ENCODE measurements at regions of chr19 and their contacts with region 1.

Region 1: GRCh38 chr19:43595999-43596841 is at the starts of genes IRGQ and ZNF576:
- DNase-seq: peak; percentile 100
- ATAC-seq: peak; percentile 82
- H3K4me3 Mint-ChIP-seq: peak within 1 kb of the TSS; percentile 98
- H3K27ac Mint-ChIP-seq: peak within 1 kb of the TSS; percentile 99
- H3K4me1 Mint-ChIP-seq: peaks cover 37% of the 10 kb centered on the region
- H3K27me3 Mint-ChIP-seq: no peaks in the 10 kb centered on the region
- total RNA-seq, gene IRGQ: 11.2 to 14.0 TPM
- total RNA-seq, gene ZNF576: 14.1 to 17.3 TPM

Region 2: DNA sequence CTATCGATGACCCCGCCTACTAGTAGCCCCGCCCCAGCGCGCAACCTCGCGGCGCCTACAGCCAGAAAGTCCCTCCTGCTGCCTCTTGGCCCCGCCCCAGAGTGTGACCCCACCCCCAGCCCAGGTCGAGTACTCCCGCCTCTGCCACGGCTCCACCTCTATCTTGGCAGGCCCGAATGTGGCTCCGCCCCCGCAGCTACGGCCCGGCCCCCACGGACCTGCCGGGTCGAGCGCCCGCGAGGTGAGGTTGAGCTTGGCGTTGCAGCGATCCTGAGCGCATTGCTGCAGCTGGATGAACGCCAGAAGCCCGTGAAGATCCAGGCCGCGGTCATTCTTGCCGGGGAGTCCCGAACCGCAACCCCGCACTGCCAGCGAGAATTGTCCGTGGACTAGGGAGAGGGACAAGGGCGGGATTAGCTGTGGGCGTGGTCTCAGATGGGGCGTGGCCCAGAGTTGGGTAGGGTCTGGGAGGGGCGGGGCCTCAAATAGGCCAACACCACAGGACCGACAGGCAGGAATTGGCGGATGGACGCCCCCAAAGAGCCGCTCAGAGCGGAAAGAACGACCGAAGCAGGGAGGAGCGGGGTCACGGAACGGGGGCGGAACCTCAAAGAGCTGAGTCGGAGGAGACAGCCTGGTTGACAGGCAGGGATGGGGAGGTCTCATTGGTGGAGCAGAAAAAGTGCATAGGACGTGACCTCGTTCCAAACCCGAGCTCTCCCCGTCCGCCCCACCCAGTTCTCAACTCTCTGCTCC is 132.7 kb before region 1 on chr19:
- CTCF ChIA-PET with region 1: interaction called, 11 read pairs
- POLR2A ChIA-PET with region 1: no interaction called
- DNase-seq: peak; percentile 99
- ATAC-seq: peak; percentile 88
- H3K4me3 Mint-ChIP-seq: peak overlapping the region; percentile 85
- H3K27ac Mint-ChIP-seq: peak overlapping the region; percentile 96
- H3K4me1 Mint-ChIP-seq: peaks cover 44% of the 10 kb centered on the region
- H3K27me3 Mint-ChIP-seq: no peaks in the 10 kb centered on the region

Region 3: GRCh38 chr19:43526884-43527859 is 69.0 kb before region 1 on chr19 and contains the start of gene ETHE1:
- CTCF ChIA-PET with region 1: interaction called, 88 read pairs
- POLR2A ChIA-PET with region 1: interaction called, 3 read pairs
- DNase-seq: peak; percentile 83
- ATAC-seq: peak; percentile 92
- H3K4me3 Mint-ChIP-seq: peak within 1 kb of the TSS; percentile 95
- H3K27ac Mint-ChIP-seq: peak within 1 kb of the TSS; percentile 68
- H3K4me1 Mint-ChIP-seq: peaks cover 29% of the 10 kb centered on the region
- H3K27me3 Mint-ChIP-seq: no peaks in the 10 kb centered on the region
- total RNA-seq, gene ETHE1: 67.9 to 69.1 TPM

Region 4: GRCh38 chr19:43555185-43555770 is 40.9 kb before region 1 on chr19:
- CTCF ChIA-PET with region 1: interaction called, 239 read pairs
- POLR2A ChIA-PET with region 1: interaction called, 20 read pairs
- DNase-seq: peak; percentile 91
- ATAC-seq: peak; percentile 95
- H3K4me3 Mint-ChIP-seq: no peak overlapping the region
- H3K27ac Mint-ChIP-seq: peak overlapping the region; percentile 6
- H3K4me1 Mint-ChIP-seq: peaks cover 8% of the 10 kb centered on the region
- H3K27me3 Mint-ChIP-seq: no peaks in the 10 kb centered on the region

Region 5: GRCh38 chr19:43570174-43570791 is 25.9 kb before region 1 on chr19:
- CTCF ChIA-PET with region 1: interaction called, 67 read pairs
- POLR2A ChIA-PET with region 1: interaction called, 44 read pairs
- DNase-seq: no peak
- ATAC-seq: peak; percentile 12
- H3K4me3 Mint-ChIP-seq: no peak overlapping the region
- H3K27ac Mint-ChIP-seq: no peak overlapping the region
- H3K4me1 Mint-ChIP-seq: peaks cover 20% of the 10 kb centered on the region
- H3K27me3 Mint-ChIP-seq: no peaks in the 10 kb centered on the region

Region 6: GRCh38 chr19:43584484-43584883 is 11.7 kb before region 1 on chr19:
- CTCF ChIA-PET with region 1: interaction called, 88 read pairs
- POLR2A ChIA-PET with region 1: interaction called, 9 read pairs
- DNase-seq: no peak
- ATAC-seq: no peak
- H3K4me3 Mint-ChIP-seq: no peak overlapping the region
- H3K27ac Mint-ChIP-seq: peak overlapping the region; percentile 86
- H3K4me1 Mint-ChIP-seq: peaks cover 45% of the 10 kb centered on the region
- H3K27me3 Mint-ChIP-seq: no peaks in the 10 kb centered on the region

Region 7: DNA sequence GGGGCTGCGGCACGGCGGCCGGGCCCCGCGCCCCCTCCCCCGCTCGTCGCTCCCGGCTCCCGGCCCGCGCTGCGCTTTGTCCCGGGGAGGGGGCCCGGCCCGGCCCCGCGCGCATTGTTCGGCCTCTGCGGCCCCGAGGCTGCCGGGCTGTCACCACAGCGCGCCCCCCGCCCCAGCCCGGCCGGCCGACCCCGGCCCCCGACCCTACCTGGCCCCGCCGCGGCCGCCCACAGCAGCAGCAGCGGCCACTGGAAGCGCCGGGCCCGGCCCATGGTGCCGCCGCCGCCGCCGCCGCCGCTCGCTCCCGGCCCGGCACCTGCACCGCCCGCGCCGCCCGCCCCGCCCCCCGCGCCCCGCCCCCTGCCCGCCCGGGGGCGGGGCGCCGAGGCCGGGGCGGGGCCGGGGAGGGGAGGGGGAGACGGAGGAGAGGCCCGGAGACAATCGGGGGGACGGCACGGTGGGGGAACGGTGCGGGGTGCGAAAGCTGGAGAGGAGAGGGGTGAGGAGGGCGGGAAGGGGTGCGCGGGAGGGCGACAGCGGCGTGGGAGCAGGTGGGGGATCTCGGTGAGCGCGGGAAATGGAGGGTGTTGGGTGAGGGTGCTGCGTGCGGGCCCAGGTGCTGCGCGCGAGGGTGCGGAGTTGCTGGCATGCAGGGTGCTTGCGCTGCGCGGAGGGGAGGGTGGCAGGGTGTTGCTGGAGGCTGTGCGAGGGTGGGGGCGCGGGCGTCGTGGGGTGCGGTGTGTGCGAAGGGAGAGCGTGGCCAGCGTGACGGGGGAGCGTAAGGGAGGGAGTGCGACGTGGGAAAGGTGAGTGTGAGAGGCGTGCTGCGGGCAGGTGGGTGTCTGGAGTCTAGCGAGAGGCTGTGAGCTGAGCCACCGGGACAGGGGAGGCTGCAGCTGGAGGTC is 43.6 kb after region 1 on chr19 and contains the start of gene CADM4:
- CTCF ChIA-PET with region 1: no interaction called
- POLR2A ChIA-PET with region 1: no interaction called
- DNase-seq: peak; percentile 48
- ATAC-seq: peak; percentile 84
- H3K4me3 Mint-ChIP-seq: peak within 1 kb of the TSS; percentile 70
- H3K27ac Mint-ChIP-seq: peak within 1 kb of the TSS; percentile 11
- H3K4me1 Mint-ChIP-seq: peaks cover 17% of the 10 kb centered on the region
- H3K27me3 Mint-ChIP-seq: peaks cover 55% of the 10 kb centered on the region
- total RNA-seq, gene CADM4: 0.10 to 0.40 TPM